Activated naive CD4-positive, alpha-beta T cell treated with anti-CD3 and anti-CD28 coated beads for 36 hours (primary cell): ENCODE measurements at regions of chr7 and their contacts with region 1.

Region 1: DNA sequence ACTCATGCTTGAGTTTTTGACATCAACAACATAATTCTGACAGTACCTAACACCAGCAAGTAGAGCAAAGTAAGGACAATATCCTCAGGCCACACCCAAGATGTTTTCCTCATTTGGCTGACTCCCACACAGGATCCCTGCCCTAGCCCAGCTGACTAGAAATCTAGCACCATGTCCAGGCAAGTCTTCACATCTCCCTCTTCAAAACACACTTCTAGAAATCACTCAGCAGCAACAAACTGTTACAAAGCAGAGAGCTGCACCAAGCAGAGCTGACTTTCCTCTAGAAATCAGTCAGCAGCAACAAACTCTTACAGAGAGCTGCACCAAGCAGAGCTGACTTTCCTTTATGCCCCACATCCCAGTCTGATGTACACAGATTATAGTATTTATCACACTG is 7.7 kb downstream of the TMEM168 start:
- DNase-seq: peak; percentile 66
- H3K4me3 Mint-ChIP-seq: peak overlapping the region; percentile 23
- H3K27ac Mint-ChIP-seq: peak overlapping the region; percentile 27
- H3K4me1 Mint-ChIP-seq: peaks cover 29% of the 10 kb centered on the region
- H3K27me3 Mint-ChIP-seq: no peaks in the 10 kb centered on the region

Region 2: GRCh38 chr7:112266595-112267270 is 515.8 kb before region 1 on chr7:
- CTCF ChIA-PET with region 1: no interaction called
- intact Hi-C with region 1: loop called (anchors 5 kb)
- DNase-seq: no peak
- H3K4me3 Mint-ChIP-seq: no peak overlapping the region
- H3K27ac Mint-ChIP-seq: no peak overlapping the region
- H3K4me1 Mint-ChIP-seq: peaks cover 15% of the 10 kb centered on the region
- H3K27me3 Mint-ChIP-seq: no peaks in the 10 kb centered on the region

Region 3: DNA sequence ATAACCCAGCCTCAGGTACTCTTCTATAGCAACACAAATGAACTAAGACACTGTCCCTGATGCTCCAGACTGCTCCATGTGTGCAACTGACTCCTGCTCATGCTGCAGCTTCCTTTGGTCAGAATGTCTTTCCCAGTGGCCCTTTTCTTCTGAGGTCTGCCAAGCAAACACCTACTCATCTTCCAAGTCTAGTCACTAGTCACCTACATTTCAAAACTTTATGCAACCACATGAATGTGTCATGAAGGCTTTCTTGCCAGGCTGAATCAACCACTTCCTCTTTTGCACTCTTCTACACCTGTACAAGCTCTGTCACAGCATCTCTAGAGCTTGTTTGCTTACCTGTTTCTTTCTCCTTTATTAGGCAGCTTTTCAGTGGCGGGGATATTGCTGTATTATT is 225.9 kb before region 1 on chr7:
- CTCF ChIA-PET with region 1: no interaction called
- intact Hi-C with region 1: loop called (anchors 5 kb)
- DNase-seq: peak; percentile 43
- H3K4me3 Mint-ChIP-seq: no peak overlapping the region
- H3K27ac Mint-ChIP-seq: no peak overlapping the region
- H3K4me1 Mint-ChIP-seq: peaks cover 14% of the 10 kb centered on the region
- H3K27me3 Mint-ChIP-seq: no peaks in the 10 kb centered on the region